PC-9 (cell line): ENCODE measurements at regions of chr16 and their contacts with region 1.

Region 1: GRCh38 chr16:83826146-83826913 is 18.6 kb downstream of the HSBP1 start:
- DNase-seq: peak; percentile 85 to 88
- H3K4me3 ChIP-seq: no peak overlapping the region
- H3K27ac ChIP-seq: no peak overlapping the region
- H3K4me1 ChIP-seq: peaks cover 9% of the 10 kb centered on the region; the same call in 1 of the 2 replicates
- H3K27me3 ChIP-seq: peaks cover 35% of the 10 kb centered on the region; the same call in 1 of the 2 replicates
- CTCF ChIP-seq: peak; percentile 91

Region 2: DNA sequence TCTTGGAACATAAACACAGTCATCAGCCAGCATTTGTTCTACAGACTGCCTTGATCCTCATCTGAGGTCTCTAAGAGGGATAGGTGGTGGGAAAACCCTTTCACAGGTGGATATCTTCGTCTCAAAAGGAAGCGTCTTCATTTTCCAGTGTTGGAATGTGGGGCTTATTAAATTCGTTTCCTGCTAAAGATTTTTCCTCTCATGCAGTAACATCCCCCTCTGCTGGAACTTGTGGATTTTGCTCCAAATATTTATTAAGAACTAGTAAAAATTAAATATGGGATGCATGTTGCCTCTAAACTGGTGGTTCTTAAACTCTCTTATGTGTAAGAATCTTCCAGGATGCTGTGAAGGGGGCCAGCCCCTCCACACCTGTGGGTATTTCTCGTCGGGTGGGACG is 52.5 kb after region 1 on chr16:
- CTCF ChIA-PET with region 1: no interaction called
- POLR2A ChIA-PET with region 1: no interaction called
- intact Hi-C with region 1: loop called (anchors 1 kb)
- DNase-seq: peak in 1 of 2 experiments; percentile 41
- H3K4me3 ChIP-seq: no peak overlapping the region
- H3K27ac ChIP-seq: no peak overlapping the region
- H3K4me1 ChIP-seq: no peaks in the 10 kb centered on the region
- H3K27me3 ChIP-seq: peaks cover 94% of the 10 kb centered on the region
- CTCF ChIP-seq: peak; percentile 72

Region 3: GRCh38 chr16:83933885-83934683 is 107.8 kb after region 1 on chr16:
- CTCF ChIA-PET with region 1: no interaction called
- POLR2A ChIA-PET with region 1: no interaction called
- intact Hi-C with region 1: no loop called
- DNase-seq: no peak
- H3K4me3 ChIP-seq: no peak overlapping the region
- H3K27ac ChIP-seq: no peak overlapping the region
- H3K4me1 ChIP-seq: peaks cover 3% of the 10 kb centered on the region
- H3K27me3 ChIP-seq: no peaks in the 10 kb centered on the region
- CTCF ChIP-seq: no peak

Region 4: GRCh38 chr16:84044118-84044488 is 217.8 kb after region 1 on chr16:
- CTCF ChIA-PET with region 1: no interaction called
- POLR2A ChIA-PET with region 1: no interaction called
- intact Hi-C with region 1: loop called (anchors 5 kb)
- DNase-seq: no peak
- H3K4me3 ChIP-seq: no peak overlapping the region
- H3K27ac ChIP-seq: no peak overlapping the region
- H3K4me1 ChIP-seq: no peaks in the 10 kb centered on the region
- H3K27me3 ChIP-seq: peaks cover 28% of the 10 kb centered on the region
- CTCF ChIP-seq: peak; percentile 53; the same call in 1 of the 2 replicates

Region 5: DNA sequence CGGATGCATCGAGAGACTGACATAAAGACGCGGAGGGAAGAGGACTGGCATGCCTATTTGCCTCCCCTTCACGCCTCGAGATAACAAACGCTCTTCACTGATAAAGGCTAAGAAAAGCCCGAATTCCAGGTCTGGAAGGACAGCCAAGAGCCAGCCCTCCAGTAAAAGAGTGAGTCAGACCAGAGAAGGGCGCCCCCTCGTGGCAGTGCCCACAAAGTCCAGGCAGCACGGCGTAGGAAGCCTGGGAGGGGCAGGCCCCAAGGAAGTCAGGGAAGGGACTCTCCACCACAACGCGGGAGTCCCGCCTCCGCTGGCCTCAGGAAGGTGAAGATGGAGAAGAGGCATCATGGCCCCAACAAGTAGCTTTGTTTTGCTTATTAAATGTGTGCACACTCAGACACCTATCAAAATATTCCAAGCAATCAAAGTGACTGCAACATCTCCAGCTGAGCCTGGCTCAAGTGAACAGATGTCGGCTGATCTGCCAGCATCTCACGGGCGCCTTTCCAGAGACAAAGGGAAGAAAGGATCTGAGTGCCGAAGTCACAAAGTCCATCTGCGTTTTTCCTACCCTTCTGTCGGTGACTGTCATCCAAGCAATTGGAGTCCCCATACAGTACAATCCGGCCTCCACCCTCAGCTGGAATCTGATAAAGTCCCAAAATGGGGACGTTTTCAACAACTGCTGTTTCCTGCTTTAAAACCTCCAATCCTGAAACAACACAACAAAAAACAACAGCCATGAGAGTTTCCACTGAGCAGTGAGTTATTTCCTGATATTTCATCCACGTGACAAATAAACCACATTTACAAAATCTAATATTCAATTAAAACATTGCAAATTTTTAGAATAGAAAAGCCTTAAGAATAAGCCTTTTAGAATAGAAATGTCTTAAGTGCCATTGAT is 236.7 kb after region 1 on chr16:
- CTCF ChIA-PET with region 1: no interaction called
- POLR2A ChIA-PET with region 1: no interaction called
- intact Hi-C with region 1: loop called (anchors 1 kb)
- DNase-seq: peak; percentile 44 to 76
- H3K4me3 ChIP-seq: no peak overlapping the region
- H3K27ac ChIP-seq: no peak overlapping the region
- H3K4me1 ChIP-seq: no peaks in the 10 kb centered on the region
- H3K27me3 ChIP-seq: no peaks in the 10 kb centered on the region
- CTCF ChIP-seq: peak; percentile 89